H1 (cell line): ENCODE measurements at regions of chr19 and their contacts with region 1.

Region 1: GRCh38 chr19:17859533-17860330 is at the start of gene RPL18A:
- DNase-seq: peak; percentile 91 to 99
- H3K4me3 ChIP-seq: peak within 1 kb of the TSS; percentile 98 to 100 (median 99)
- H3K27ac ChIP-seq: peak within 1 kb of the TSS; percentile 94
- H3K4me1 ChIP-seq: peaks cover 0 to 13% (median 6%) of the 10 kb centered on the region in 4 experiments; a peak in 6 of 7 replicates
- H3K27me3 ChIP-seq: no peaks in the 10 kb centered on the region
- CTCF ChIP-seq: peak; percentile 81 to 93 (median 82)
- EP300 ChIP-seq: no peak; a peak in 1 of 3 replicates
- POLR2A ChIP-seq: peak; percentile 85 to 97
- RAD21 ChIP-seq: peak; percentile 76 to 79
- total RNA-seq, gene RPL18A: 2,749 and 2,894 TPM in 2 replicates

Region 2: DNA sequence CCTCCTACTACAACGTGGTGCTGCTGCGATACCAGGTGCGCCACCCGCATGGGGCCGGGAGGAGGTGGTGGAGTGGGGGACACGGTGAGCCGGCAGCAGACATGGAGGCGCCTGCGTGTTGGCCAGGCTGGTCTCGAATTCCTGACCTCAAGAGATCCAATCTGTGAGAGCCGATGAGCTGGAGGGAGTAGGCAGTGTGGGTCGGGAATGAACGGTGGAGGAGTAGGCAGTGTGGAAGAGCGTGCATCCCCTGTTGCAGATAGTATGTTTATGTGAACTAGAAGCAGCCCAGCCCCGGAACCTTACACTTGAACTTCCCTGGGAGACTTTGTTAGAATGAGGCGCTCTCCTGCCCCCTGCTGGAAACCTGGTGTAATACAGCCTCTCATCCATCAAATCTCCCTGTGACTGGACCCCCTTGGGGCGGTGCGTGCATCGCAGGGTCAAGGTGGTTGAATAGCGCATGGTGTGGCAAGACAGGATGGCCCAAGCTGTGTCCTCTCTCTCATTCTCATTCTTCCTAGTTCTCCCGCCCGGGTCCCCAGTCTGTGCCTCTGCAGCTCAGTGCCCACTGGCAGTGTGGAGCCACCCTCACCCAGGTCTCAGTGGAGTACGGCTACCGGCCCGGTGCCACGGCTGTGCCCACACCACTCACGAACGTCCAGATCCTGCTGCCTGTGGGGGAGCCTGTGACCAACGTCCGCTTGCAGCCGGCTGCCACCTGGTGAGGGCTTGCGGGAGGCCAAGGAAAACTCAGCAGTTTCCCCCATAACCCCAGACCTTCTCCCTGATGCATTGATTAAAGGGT is 75.3 kb before region 1 on chr19:
- CTCF ChIA-PET with region 1: interaction called, 8 read pairs
- POLR2A ChIA-PET with region 1: interaction called, 11 read pairs
- DNase-seq: peak in 1 of 2 experiments; percentile 96
- H3K4me3 ChIP-seq: no peak overlapping the region
- H3K27ac ChIP-seq: no peak overlapping the region
- H3K4me1 ChIP-seq: peaks cover 0 to 4% (median 3%) of the 10 kb centered on the region in 4 experiments; a peak in 4 of 7 replicates
- H3K27me3 ChIP-seq: no peaks in the 10 kb centered on the region
- CTCF ChIP-seq: peak; percentile 66 to 89 (median 87)
- EP300 ChIP-seq: no peak
- POLR2A ChIP-seq: no peak
- RAD21 ChIP-seq: peak; percentile 66 to 77

Region 3: GRCh38 chr19:17811681-17812080 is 48.1 kb before region 1 on chr19:
- CTCF ChIA-PET with region 1: interaction called, 5 read pairs
- POLR2A ChIA-PET with region 1: interaction called, 10 read pairs
- DNase-seq: no peak
- H3K4me3 ChIP-seq: no peak overlapping the region
- H3K27ac ChIP-seq: no peak overlapping the region
- H3K4me1 ChIP-seq: no peaks in the 10 kb centered on the region
- H3K27me3 ChIP-seq: no peaks in the 10 kb centered on the region; a peak in 1 of 7 replicates
- CTCF ChIP-seq: no peak
- EP300 ChIP-seq: no peak
- POLR2A ChIP-seq: no peak
- RAD21 ChIP-seq: no peak

Region 4: GRCh38 chr19:17841810-17842662 is 17.7 kb before region 1 on chr19:
- CTCF ChIA-PET with region 1: interaction called, 8 read pairs
- POLR2A ChIA-PET with region 1: interaction called, 141 read pairs
- DNase-seq: peak; percentile 97 to 99
- H3K4me3 ChIP-seq: peak overlapping the region; percentile 50 to 72 (median 62)
- H3K27ac ChIP-seq: no peak overlapping the region
- H3K4me1 ChIP-seq: peaks cover 0 to 11% (median 3%) of the 10 kb centered on the region in 4 experiments; a peak in 5 of 7 replicates
- H3K27me3 ChIP-seq: peaks cover 0 to 9% (median 2%) of the 10 kb centered on the region in 4 experiments; a peak in 3 of 7 replicates
- CTCF ChIP-seq: no peak
- EP300 ChIP-seq: no peak
- POLR2A ChIP-seq: no peak; a peak in 1 of 3 replicates
- RAD21 ChIP-seq: no peak

Region 5: DNA sequence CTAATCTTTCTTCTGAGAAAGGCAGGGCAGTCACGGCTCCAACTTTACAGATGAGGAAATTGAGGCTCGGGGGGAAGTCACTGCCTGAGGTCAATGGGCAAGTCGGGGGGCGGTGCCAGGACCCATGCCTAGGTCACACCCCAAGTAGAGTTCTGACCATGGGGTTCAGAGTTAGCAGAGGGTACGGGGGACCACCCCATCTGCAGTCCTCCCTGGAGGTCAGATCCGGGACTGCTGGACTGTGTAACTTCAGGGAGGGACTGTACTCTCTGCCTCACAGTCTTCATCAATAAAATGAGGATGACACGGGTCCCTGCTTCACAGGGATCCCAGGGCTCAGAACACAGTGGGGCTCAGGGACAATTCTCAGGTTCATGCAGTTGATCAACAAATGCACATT is 19.7 kb after region 1 on chr19:
- CTCF ChIA-PET with region 1: interaction called, 5 read pairs
- POLR2A ChIA-PET with region 1: interaction called, 30 read pairs
- DNase-seq: no peak
- H3K4me3 ChIP-seq: no peak overlapping the region
- H3K27ac ChIP-seq: no peak overlapping the region
- H3K4me1 ChIP-seq: no peaks in the 10 kb centered on the region
- H3K27me3 ChIP-seq: no peaks in the 10 kb centered on the region
- CTCF ChIP-seq: no peak
- EP300 ChIP-seq: no peak
- POLR2A ChIP-seq: no peak
- RAD21 ChIP-seq: no peak

Region 6: DNA sequence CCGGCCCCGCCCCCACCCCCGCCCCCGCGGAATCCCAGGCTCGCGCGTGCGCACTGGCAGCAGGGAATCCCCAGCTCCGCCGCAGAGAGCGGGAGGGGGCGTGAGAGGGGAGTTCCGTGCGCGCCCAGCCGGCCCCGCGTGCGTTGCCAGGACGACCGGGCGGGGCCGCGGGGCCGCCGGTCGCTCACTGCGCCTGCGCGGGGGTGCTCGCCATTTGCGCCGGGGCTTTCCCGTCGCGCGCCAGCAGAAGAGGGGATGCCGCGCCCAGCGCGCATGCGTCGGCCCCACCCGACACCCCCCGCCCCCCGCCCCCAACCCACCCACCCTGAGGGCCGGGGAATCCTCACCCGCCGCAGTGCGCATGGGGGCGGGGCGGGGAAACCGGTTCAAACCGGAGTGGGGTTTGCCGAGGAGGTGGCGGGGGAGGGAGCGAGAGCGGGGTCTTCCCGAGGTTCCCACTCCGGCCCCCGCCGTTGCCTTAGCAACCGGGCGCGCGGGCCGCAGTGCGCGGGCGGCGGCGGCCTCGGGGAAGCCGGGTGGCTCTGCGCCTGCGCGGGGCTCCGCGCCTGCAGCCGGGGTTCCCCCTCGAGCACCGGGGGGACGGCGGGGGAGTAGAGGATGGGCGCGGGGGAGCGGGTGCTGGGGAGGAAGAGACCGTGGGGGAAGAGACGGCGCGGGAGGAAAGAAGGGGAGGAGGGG is 88.2 kb after region 1 on chr19:
- CTCF ChIA-PET with region 1: interaction called, 3 read pairs
- POLR2A ChIA-PET with region 1: interaction called, 25 read pairs
- DNase-seq: peak; percentile 87 to 95
- H3K4me3 ChIP-seq: peak overlapping the region in 2 of 4 experiments; percentile 48 to 73; a peak in 6 of 8 replicates
- H3K27ac ChIP-seq: no peak overlapping the region
- H3K4me1 ChIP-seq: peaks cover 0 to 32% (median 24%) of the 10 kb centered on the region in 4 experiments; a peak in 6 of 7 replicates
- H3K27me3 ChIP-seq: peaks cover 16 to 42% (median 35%) of the 10 kb centered on the region in 4 experiments
- CTCF ChIP-seq: no peak
- EP300 ChIP-seq: no peak
- POLR2A ChIP-seq: no peak
- RAD21 ChIP-seq: no peak

Region 7: DNA sequence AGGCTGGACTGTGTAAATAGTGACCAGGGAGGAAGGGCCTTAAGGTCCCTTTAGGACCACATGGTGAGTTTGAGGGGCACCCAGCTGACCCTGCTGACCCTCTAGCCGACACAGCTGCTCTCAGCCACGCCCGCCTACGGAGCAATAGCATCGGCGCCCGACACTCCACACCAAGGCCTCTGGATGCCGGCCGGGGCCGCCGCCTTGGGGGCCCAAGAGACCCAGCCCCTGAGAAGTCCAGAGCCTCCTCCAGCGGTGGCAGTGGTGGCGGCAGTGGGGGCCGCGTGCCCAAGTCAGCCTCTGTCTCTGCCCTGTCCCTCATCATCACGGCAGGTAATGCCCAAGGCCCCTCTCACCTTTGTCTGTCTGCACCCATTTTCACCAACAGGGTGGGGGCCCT is 284.6 kb after region 1 on chr19:
- CTCF ChIA-PET with region 1: no interaction called
- POLR2A ChIA-PET with region 1: no interaction called
- DNase-seq: no peak
- H3K4me3 ChIP-seq: no peak overlapping the region
- H3K27ac ChIP-seq: no peak overlapping the region
- H3K4me1 ChIP-seq: no peaks in the 10 kb centered on the region
- H3K27me3 ChIP-seq: no peaks in the 10 kb centered on the region
- CTCF ChIP-seq: no peak
- EP300 ChIP-seq: no peak
- POLR2A ChIP-seq: no peak
- RAD21 ChIP-seq: no peak